ENCODE measurements at regions of chr18 and their contacts with region 1.

Region 1: DNA sequence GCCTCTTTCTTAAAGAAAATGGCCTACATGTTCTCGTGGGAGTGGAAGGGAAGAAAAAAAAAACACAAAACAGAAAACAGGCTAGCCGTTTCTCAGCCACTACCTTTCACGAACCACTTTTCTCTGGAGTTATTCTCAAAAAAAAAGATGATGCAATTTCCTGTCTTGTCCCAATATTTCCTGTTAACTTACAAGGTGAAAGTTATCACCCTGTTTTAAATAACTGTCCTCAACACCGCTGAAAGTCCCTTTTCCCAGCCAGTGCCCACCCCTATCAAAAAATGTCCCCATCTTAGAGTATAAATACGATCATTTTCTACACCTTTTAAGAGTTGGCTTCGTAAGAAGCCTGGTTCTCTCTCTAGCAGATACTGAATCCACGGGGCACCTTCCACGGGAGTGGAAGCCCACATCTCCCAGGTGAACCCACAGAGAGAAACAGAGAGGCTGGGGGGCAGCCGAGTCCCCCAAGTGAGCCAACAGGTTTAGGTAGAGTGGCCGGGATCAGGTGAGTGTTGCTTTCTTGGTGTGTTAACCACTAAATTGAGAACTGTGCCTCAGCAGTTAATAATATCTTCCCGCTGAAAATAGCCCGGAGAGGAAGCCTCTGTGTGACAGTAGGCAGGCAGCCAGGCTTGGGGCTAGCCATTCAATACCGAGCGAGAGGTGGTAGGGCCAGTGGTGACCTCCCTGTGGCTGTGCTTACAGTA is 15.9 kb downstream of the SMAD7 start:
- DNase-seq: peak; percentile 88
- ATAC-seq: peak; percentile 73

Region 2: GRCh38 chr18:48851599-48851960 is 83.3 kb before region 1 on chr18:
- intact Hi-C with region 1: loop called (anchors 5 kb)
- DNase-seq: peak; percentile 83
- ATAC-seq: peak; percentile 68

Region 3: GRCh38 chr18:48889115-48889941 is 45.5 kb before region 1 on chr18:
- intact Hi-C with region 1: loop called (anchors 5 kb)
- DNase-seq: no peak
- ATAC-seq: no peak

Measured in Right ventricle myocardium inferior (tissue), 1 donor.